ENCODE measurements at regions of chr17 and their contacts with region 1.

Region 1: GRCh38 chr17:2064980-2065785 is 10.3 kb downstream of the HIC1 start:
- DNase-seq: no peak
- H3K4me3 ChIP-seq: no peak overlapping the region
- CTCF ChIP-seq: peak; percentile 63

Region 2: DNA sequence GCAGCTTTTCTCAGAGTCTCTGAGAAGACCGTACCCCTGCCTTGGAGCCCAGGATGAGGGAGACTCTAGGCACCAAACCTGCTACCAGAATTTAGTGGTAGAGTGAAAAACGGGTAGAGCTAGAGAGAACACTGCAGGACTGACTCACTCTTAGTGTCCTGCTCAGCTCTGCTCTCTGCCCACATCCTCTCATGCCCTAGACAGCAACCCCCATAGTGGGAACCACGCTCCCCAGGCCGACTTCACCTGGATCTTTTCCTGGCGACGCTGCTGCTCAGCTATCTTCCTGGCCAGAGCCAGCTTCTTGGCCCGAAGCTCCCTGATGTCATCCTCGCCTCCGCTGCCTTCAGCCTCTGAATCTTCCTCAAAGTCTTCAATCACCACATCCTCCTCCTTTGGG is 16.4 kb after region 1 on chr17:
- CTCF ChIA-PET with region 1: interaction called, 12 read pairs
- POLR2A ChIA-PET with region 1: interaction called, 14 read pairs
- DNase-seq: no peak
- H3K4me3 ChIP-seq: no peak overlapping the region
- CTCF ChIP-seq: no peak

Region 3: DNA sequence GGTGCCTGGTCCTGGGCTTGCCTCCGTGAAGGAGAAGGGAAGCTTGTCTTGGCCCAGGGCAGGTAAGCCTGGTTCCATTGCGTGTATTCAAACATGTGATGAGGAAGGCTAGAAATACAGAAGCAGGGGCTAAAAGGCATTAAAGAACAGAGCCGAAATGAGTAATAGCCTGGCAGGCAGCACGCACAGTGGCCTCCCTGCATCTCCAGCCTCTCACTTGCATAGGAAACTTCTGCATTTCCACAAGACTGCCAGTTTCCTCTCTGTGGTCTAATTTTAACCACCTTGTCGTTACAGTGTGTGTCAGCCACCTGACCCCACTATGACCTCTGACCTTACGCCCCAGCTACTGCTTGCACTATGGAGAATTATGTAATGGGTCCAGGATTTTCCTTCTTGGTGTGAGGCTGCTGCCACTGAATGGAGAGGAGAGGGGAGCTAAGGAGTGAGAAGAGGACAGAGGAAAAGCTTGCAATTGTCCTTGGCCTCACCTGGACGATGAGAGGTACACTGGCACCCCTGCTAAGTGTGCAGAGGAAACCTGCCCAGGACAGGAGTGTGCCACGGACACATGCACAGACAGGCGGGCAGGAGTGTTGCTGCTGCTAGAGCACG is 22.5 kb after region 1 on chr17:
- CTCF ChIA-PET with region 1: interaction called, 16 read pairs
- POLR2A ChIA-PET with region 1: interaction called, 16 read pairs
- DNase-seq: no peak
- H3K4me3 ChIP-seq: no peak overlapping the region
- CTCF ChIP-seq: no peak

Region 4: GRCh38 chr17:2094891-2095535 is 29.8 kb after region 1 on chr17:
- CTCF ChIA-PET with region 1: interaction called, 16 read pairs
- POLR2A ChIA-PET with region 1: interaction called, 16 read pairs
- DNase-seq: no peak
- H3K4me3 ChIP-seq: no peak overlapping the region
- CTCF ChIP-seq: peak; percentile 89

Region 5: DNA sequence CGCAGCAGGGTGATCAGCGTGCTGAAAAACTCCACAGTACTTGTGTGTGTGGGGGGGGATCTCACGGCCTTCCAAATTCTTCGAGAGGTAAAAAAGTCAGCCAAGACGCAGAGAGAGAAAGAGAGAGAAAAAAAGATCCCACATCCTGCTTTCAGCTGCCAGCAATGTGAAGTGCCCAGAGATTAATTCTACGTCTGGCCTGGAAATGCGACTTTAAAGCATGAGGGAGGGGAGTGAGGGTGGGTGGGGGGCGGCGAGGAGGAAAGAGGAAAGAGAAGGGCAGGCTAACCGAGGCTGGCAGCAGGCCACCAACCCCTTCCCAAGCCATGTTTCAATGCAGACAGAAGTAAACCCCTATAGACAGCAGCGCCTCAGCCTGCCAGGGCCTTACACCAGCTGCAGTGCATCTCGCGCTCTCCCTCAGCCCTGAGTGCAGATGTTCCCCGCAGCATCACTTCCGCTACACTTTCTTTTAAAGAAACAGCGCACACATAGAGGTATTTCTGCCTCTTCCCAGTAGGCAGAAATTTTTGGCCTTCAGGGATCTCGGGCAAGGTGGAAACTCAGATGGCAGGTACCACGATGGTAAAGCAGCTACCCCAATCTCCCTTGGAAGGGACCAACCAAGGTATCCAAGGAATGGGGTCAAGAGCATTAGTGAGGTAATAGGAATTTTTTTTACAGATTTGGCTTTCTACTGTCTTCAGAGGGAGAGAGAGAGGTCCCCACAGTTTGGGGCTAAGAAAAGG is 150.6 kb after region 1 on chr17:
- CTCF ChIA-PET with region 1: interaction called, 5 read pairs
- POLR2A ChIA-PET with region 1: interaction called, 11 read pairs
- DNase-seq: no peak
- H3K4me3 ChIP-seq: peak overlapping the region; percentile 42
- CTCF ChIP-seq: no peak

Region 6: DNA sequence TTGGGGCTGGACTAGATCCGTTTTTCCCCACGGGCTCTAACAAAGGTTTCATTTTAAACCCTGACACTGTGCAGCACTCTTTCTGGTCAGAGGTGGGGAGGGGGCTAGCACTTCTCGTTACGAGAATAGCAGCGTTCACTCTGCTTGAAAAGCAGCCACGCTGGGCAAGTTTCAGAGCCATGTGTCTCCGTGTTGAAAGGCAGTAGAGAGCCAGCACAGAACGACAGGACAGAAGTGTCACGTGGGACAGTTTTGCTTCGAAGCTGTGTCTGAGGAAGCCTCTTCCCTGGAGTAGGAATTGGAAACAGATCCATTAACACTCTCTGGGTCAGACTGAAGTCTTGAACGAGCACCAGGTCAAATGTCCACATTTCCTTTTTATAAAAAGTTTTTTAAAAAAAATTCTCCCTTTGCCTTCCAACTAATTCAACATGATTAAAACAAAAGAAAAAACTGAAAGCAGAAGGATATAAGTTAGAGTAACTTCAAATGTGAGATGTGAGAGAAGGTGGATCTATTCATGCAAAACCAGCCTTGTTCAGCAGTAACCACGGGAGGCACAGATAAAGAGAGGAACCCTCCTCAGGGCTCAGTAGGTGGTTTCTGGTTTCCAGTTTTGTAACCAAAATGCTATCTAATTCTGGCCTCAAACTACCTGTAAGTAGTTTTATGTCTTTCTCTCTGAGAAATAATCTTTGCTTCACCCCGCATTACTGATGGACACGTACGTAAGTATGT is 173.4 kb after region 1 on chr17:
- CTCF ChIA-PET with region 1: interaction called, 348 read pairs
- POLR2A ChIA-PET with region 1: no interaction called
- DNase-seq: no peak
- H3K4me3 ChIP-seq: peak overlapping the region; percentile 3
- CTCF ChIP-seq: no peak

Region 7: DNA sequence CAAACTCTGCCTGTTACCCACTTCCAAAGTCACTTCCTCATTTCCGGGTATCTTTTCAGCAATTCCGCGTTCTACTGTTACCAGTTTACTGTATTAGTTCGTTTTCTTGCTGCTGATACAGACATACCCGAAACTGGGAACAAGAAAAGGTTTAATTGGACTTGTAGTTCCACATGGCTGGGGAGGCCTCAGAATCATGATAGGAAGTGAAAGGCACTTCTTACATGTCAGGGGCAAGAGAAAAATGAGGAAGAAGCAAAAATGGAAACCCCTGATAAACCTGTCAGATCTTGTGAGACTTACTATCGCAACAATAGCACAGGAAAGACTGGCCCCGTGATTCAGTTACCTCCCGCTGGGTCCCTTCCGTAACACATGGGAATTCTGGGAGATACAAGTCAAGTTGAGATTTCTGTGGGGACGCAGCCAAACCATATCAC is 559.1 kb after region 1 on chr17:
- CTCF ChIA-PET with region 1: no interaction called
- POLR2A ChIA-PET with region 1: no interaction called
- DNase-seq: no peak
- H3K4me3 ChIP-seq: no peak overlapping the region
- CTCF ChIP-seq: no peak

Measured in AG04449 (cell line).